Mammary epithelial cell (primary cell): ENCODE measurements at regions of chr20 and their contacts with region 1.

Region 1: DNA sequence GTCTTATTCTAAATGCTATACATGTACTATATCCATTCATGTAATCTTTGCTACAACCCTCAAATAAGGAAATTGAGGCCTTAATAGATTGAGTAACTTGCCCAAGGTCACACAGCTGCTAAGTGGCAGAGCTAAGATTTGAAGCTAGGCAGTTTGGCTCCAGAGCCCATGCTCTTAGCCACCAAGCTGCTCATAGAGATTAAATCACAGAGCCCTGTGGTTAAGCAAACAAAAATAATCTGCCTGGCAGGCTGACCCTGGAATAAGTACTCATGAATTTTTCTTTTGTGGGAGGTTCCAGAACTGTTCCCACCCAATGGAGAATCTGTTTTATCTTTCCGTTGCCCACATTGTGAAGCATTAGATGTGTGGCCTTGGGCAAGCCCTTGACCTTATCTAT is 7.4 kb downstream of the AAR2 start:
- DNase-seq: no peak
- H3K4me3 ChIP-seq: no peak overlapping the region
- H3K27ac ChIP-seq: no peak overlapping the region
- H3K4me1 ChIP-seq: no peaks in the 10 kb centered on the region
- H3K27me3 ChIP-seq: no peaks in the 10 kb centered on the region
- CTCF ChIP-seq: no peak

Region 2: DNA sequence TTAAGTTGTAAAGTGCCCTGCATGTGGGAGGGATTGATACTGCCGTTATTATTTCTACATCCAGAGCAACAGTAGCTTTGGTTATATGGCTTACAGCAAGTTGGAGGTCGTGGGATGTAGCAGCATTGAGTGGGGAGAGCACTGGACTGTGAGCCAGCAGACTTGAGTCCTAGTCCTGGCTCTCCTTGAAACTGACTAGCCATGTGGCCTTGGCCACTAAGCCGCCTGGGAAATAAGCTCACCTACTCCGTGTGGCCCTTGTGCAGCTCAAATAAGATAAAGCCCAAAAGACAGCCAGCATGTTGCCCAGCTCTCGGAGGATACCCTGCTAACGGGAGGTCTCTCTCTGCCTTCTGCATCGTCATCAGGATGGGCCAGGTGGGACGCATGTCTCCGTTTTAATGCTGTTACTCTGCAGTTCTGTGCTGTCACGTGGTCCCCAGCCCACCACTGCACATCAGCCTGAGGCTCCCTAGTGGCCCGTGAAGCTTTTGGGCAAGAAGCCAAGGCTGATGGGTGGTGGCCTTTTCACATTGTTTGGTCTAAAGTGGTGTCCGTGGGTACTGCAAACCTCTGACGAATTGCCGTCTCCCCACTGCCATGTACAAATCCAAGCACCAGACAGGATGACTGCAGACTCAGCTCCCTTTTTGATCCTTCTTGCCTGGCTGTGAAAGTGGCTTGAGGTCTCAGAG is 81.3 kb before region 1 on chr20:
- CTCF ChIA-PET with region 1: no interaction called
- dilution Hi-C with region 1: loop called (anchors 5 kb)
- in situ Hi-C with region 1: no loop called
- intact Hi-C with region 1: no loop called
- DNase-seq: no peak
- H3K4me3 ChIP-seq: no peak overlapping the region
- H3K27ac ChIP-seq: no peak overlapping the region
- H3K4me1 ChIP-seq: no peaks in the 10 kb centered on the region
- H3K27me3 ChIP-seq: no peaks in the 10 kb centered on the region
- CTCF ChIP-seq: no peak

Region 3: GRCh38 chr20:36320961-36321695 is 77.4 kb after region 1 on chr20:
- CTCF ChIA-PET with region 1: no interaction called
- dilution Hi-C with region 1: no loop called
- in situ Hi-C with region 1: no loop called
- intact Hi-C with region 1: no loop called
- DNase-seq: no peak
- H3K4me3 ChIP-seq: no peak overlapping the region
- H3K27ac ChIP-seq: no peak overlapping the region
- H3K4me1 ChIP-seq: no peaks in the 10 kb centered on the region
- H3K27me3 ChIP-seq: no peaks in the 10 kb centered on the region
- CTCF ChIP-seq: no peak

Region 4: GRCh38 chr20:36367907-36368799 is 124.4 kb after region 1 on chr20:
- CTCF ChIA-PET with region 1: no interaction called
- dilution Hi-C with region 1: no loop called
- in situ Hi-C with region 1: no loop called
- intact Hi-C with region 1: no loop called
- DNase-seq: no peak
- H3K4me3 ChIP-seq: no peak overlapping the region
- H3K27ac ChIP-seq: no peak overlapping the region
- H3K4me1 ChIP-seq: no peaks in the 10 kb centered on the region
- H3K27me3 ChIP-seq: peaks cover 2% of the 10 kb centered on the region
- CTCF ChIP-seq: no peak

Region 5: DNA sequence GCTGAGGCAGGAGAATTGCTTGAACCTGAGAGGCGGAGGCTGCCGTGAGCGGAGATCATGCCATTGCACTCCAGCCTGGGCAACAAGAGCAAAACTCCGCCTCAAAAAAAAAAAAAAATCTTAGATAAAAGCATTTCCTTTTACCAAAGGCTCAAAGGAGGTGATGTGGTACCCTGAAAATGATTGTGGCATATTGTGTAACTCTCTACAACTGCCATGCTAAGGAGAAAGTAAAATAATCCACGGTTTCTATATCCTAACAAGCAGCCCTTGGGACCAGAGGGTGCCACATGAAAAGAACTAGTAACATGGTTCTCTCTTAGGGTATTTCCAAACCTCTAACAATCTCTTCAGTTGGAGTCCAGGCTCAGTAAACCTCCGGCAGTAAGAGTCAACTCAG is 441.0 kb after region 1 on chr20:
- CTCF ChIA-PET with region 1: no interaction called
- dilution Hi-C with region 1: no loop called
- in situ Hi-C with region 1: no loop called
- intact Hi-C with region 1: no loop called
- DNase-seq: no peak
- H3K4me3 ChIP-seq: no peak overlapping the region
- H3K27ac ChIP-seq: no peak overlapping the region
- H3K4me1 ChIP-seq: no peaks in the 10 kb centered on the region
- H3K27me3 ChIP-seq: no peaks in the 10 kb centered on the region
- CTCF ChIP-seq: no peak